Psoas muscle (tissue), 8 donors: ENCODE measurements at regions of chr13 and their contacts with region 1.

Region 1: DNA sequence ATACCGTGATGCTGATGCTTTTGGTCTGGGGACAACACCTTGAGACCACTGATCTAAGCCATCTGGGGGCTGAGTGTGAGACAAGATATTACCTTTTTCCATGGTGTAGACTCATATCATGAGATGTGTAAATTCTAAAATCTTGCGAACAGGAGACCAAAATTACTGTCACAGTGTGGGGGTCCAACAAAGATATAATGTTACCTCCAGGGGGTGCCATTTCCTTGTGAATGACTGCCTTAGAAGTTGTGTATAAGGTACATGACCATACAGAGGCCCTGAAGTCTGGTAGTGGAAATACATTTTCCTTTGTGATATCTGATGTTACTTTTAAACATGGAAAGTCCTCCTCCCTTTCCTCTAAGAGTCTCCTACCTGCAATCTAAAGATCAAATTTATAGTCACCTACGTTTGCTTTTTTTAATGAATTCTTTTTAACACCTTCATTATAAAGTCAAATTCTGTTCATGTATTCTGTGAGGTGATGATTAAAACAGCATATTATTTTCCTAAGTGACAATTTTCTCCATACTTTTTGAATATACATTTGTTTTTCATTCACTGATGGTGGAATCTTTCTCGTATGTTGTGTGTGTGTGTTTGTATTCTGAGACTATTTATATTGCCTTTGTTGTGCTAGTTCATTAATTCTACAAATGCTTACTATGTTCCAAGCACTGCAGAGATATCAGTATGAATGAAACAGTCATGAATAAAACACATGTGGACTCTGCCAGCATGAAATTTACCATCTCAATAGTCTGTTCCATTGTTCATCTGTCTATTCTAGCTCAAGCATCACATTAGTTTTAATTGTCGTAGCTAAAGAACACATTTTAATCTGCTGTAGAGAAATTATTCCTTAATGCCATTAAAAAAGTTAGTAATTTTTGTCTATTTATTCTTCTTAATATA is 113.7 kb downstream of the RFC3 start:
- DNase-seq: no peak
- ATAC-seq: peak in 1 of 4 donors; percentile 28
- H3K4me3 ChIP-seq: no peak overlapping the region
- H3K27ac ChIP-seq: no peak overlapping the region
- H3K4me1 ChIP-seq: no peaks in the 10 kb centered on the region
- H3K27me3 ChIP-seq: no peaks in the 10 kb centered on the region
- CTCF ChIP-seq: peak; percentile 24

Region 2: DNA sequence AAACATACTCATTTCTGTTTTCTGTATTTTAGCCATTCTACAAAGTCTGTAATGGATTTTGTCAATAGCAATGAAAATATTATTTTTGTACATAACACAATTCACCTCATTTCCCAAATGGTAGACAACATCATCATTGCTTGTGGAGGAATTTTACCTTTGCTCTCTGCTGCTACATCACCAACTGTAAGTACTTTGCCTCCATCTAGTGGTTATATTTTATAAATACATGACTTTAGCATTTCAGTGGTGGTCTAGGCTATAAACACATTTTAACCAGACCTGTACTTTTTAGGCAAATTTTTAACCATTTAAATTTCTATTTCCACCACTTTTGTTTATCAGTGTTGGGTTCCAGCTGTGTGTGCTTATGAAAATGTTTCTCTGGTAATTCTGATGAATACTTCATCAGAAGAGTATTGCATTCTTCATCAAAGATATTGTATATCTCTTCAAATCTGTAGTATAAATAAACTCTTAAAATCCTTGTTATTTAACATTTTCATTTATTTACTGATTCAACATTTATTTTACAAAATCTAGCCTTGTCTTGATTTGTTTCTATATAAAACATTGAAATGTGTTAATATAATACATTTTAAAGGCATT is 1232.8 kb after region 1 on chr13:
- intact Hi-C with region 1: loop called (anchors 5 kb)
- DNase-seq: no peak
- ATAC-seq: peak in 2 of 4 donors; percentile 58 to 63
- H3K4me3 ChIP-seq: no peak overlapping the region
- H3K27ac ChIP-seq: no peak overlapping the region
- H3K4me1 ChIP-seq: no peaks in the 10 kb centered on the region
- H3K27me3 ChIP-seq: no peaks in the 10 kb centered on the region
- CTCF ChIP-seq: peak; percentile 68